ENCODE measurements at regions of chr11 and their contacts with region 1.

Region 1: GRCh38 chr11:114586797-114587196 is 8.8 kb downstream of the NXPE4 start:
- DNase-seq: no peak
- ATAC-seq: peak; percentile 73
- H3K4me3 Mint-ChIP-seq: no peak overlapping the region
- H3K27ac Mint-ChIP-seq: no peak overlapping the region
- H3K4me1 Mint-ChIP-seq: peaks cover 5% of the 10 kb centered on the region; the same call in 1 of the 2 replicates
- H3K27me3 Mint-ChIP-seq: peaks cover 2% of the 10 kb centered on the region; the same call in 1 of the 2 replicates
- CTCF ChIP-seq: no peak

Region 2: GRCh38 chr11:114340311-114341131 is 246.3 kb before region 1 on chr11:
- CTCF ChIA-PET with region 1: interaction called, 11 read pairs
- POLR2A ChIA-PET with region 1: no interaction called
- DNase-seq: peak; percentile 41
- ATAC-seq: peak; percentile 97
- H3K4me3 Mint-ChIP-seq: no peak overlapping the region
- H3K27ac Mint-ChIP-seq: no peak overlapping the region
- H3K4me1 Mint-ChIP-seq: peaks cover 12% of the 10 kb centered on the region
- H3K27me3 Mint-ChIP-seq: no peaks in the 10 kb centered on the region; the same call in 1 of the 2 replicates
- CTCF ChIP-seq: peak; percentile 63

Measured in WTC11 (cell line).